Transverse colon (tissue), 4 donors: ENCODE measurements at regions of chr17 and their contacts with region 1.

Region 1: GRCh38 chr17:59004338-59005111 is 102.2 kb downstream of the TRIM37 start:
- DNase-seq: peak; percentile 64
- H3K4me3 ChIP-seq: no peak overlapping the region
- H3K27ac ChIP-seq: no peak overlapping the region
- H3K4me1 ChIP-seq: peaks cover 0 to 5% (median 0%) of the 10 kb centered on the region in 4 donors
- H3K27me3 ChIP-seq: no peaks in the 10 kb centered on the region
- CTCF ChIP-seq: peak; percentile 90 to 95 (median 93)
- EP300 ChIP-seq: no peak
- POLR2A ChIP-seq: no peak

Region 2: DNA sequence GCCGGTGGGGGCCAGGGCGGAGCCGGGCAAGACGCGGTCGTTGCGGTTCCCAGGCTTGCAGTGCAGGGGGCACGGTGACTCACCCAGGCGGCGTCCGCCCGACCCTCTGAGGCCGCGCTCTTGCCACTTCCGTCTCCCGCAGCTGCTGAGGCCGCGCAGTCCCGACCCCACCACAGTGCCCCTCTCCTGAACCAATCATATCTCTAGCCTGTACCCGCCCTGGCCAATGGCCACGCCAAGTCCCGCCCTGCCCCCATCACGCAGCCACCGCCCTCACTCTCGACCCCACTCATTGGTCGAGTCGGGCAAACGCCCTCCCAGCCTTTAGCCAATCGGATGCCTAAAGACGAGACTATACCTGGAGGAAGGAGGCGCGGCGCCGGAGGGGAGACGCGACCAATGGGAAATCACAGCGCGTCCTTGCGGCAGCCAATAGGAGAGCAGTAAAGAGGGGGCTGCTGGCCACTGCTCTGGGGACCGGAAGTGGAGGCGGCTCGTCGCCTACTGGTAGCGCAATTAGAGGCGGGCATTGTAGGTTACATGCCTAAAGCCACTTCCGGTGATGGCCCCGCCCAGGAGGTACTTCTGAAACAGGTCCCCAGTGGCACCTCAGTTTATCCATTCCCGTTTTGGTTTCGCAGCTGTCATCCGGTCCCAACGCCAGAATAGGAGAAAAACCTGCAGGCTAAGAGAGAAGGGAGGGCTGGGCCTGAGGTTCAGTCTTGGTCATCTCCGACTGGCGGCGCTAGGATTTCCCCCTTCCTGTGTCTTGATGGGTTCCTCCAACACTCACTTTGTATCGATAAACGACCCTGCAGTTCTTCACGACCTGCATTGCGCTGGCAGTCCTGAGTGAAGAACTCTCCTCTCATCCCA is 486.6 kb before region 1 on chr17:
- in situ Hi-C with region 1: loop called in 3 of 4 experiments (anchors 10 kb)
- intact Hi-C with region 1: loop called (anchors 10 kb)
- DNase-seq: peak; percentile 100
- H3K4me3 ChIP-seq: peak overlapping the region; percentile 59 to 73 (median 68)
- H3K27ac ChIP-seq: peak overlapping the region; percentile 92 to 97 (median 96)
- H3K4me1 ChIP-seq: peaks cover 19 to 54% (median 34%) of the 10 kb centered on the region in 4 donors
- H3K27me3 ChIP-seq: no peaks in the 10 kb centered on the region
- CTCF ChIP-seq: no peak
- EP300 ChIP-seq: no peak
- POLR2A ChIP-seq: peak; percentile 74

Region 3: DNA sequence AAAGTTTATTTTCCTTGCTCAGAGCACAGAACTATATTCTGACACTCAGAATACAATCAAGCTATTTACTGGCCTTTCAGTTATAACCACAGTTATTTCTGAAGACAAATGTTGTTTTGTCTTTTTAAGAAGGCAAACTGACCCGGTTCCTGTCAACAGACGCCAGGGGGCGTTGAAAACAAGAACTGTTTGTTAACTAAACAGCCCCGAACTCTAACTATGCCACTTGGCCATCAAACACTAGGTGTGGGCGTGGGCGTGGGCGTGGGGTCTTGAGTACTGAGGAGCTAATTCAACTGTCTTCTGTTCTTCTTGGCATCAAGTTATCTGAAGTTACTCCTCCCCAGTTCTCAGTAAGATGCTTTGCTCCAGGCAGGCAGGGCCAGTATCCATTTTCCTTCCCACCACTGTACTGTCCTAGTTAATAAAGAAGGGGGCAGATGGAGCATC is 426.9 kb before region 1 on chr17:
- in situ Hi-C with region 1: loop called in 2 of 4 experiments (anchors 10 to 25 kb)
- intact Hi-C with region 1: no loop called
- DNase-seq: peak; percentile 23
- H3K4me3 ChIP-seq: no peak overlapping the region
- H3K27ac ChIP-seq: no peak overlapping the region
- H3K4me1 ChIP-seq: no peaks in the 10 kb centered on the region
- H3K27me3 ChIP-seq: no peaks in the 10 kb centered on the region
- CTCF ChIP-seq: peak; percentile 34 to 52 (median 43)
- EP300 ChIP-seq: no peak
- POLR2A ChIP-seq: no peak

Region 4: GRCh38 chr17:58587702-58588254 is 416.7 kb before region 1 on chr17:
- in situ Hi-C with region 1: loop called in 2 of 4 experiments (anchors 10 to 25 kb)
- intact Hi-C with region 1: loop called (anchors 5 kb)
- DNase-seq: peak; percentile 54
- H3K4me3 ChIP-seq: no peak overlapping the region
- H3K27ac ChIP-seq: no peak overlapping the region
- H3K4me1 ChIP-seq: no peaks in the 10 kb centered on the region
- H3K27me3 ChIP-seq: no peaks in the 10 kb centered on the region
- CTCF ChIP-seq: peak; percentile 76 to 95 (median 91)
- EP300 ChIP-seq: no peak
- POLR2A ChIP-seq: no peak

Region 5: GRCh38 chr17:58595326-58595725 is 409.2 kb before region 1 on chr17:
- in situ Hi-C with region 1: loop called in 2 of 4 experiments (anchors 10 to 25 kb)
- intact Hi-C with region 1: no loop called
- DNase-seq: no peak
- H3K4me3 ChIP-seq: no peak overlapping the region
- H3K27ac ChIP-seq: no peak overlapping the region
- H3K4me1 ChIP-seq: no peaks in the 10 kb centered on the region
- H3K27me3 ChIP-seq: no peaks in the 10 kb centered on the region
- CTCF ChIP-seq: no peak
- EP300 ChIP-seq: no peak
- POLR2A ChIP-seq: no peak

Region 6: DNA sequence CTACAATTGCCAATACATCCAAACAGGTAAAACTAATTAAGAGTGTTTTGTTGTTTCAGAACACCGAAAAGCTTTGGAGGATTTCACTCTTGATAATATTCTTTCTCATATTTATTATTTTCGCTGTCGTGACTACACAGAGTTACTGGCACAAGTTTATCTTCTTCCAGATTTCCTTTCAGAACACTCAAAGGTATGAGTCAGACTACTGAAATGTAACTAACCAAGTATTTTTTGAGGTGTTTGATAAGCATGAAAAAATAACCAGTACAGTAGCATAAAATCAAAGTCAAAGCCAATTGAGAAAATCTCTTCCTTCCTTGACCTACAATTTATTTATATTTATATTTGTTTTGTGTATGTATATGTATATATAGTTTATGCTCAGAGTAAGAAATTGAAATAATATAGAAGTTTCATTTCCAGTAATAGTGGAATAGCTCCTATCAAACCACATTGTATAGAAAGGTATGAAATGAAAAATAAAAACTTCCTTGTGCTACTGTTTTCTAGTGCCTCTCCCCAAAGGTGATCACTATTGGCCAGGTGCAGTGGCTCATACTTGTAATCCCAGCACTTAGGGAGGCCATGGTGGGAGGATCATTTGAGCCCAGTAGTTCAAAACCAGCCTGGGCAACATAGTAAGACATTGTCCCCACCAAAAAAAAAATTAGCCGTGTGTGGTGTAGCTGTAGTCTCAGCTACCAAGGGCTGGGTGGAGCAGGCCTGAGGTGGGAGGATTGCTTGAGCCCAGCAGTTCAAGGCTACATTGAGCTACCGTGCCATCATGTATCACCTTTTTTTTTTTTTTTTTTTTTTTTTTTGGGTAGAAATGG is 301.2 kb before region 1 on chr17:
- in situ Hi-C with region 1: loop called in 1 of 4 experiments (anchors 10 kb)
- intact Hi-C with region 1: no loop called
- DNase-seq: no peak
- H3K4me3 ChIP-seq: no peak overlapping the region
- H3K27ac ChIP-seq: no peak overlapping the region
- H3K4me1 ChIP-seq: no peaks in the 10 kb centered on the region
- H3K27me3 ChIP-seq: no peaks in the 10 kb centered on the region
- CTCF ChIP-seq: no peak
- EP300 ChIP-seq: no peak
- POLR2A ChIP-seq: no peak

Region 7: GRCh38 chr17:58710936-58711775 is 293.4 kb before region 1 on chr17:
- in situ Hi-C with region 1: loop called in 3 of 4 experiments (anchors 5 to 10 kb)
- intact Hi-C with region 1: loop called (anchors 5 kb)
- DNase-seq: peak; percentile 10
- H3K4me3 ChIP-seq: no peak overlapping the region
- H3K27ac ChIP-seq: no peak overlapping the region
- H3K4me1 ChIP-seq: no peaks in the 10 kb centered on the region
- H3K27me3 ChIP-seq: no peaks in the 10 kb centered on the region
- CTCF ChIP-seq: peak; percentile 62 to 73 (median 64)
- EP300 ChIP-seq: no peak
- POLR2A ChIP-seq: no peak

Region 8: DNA sequence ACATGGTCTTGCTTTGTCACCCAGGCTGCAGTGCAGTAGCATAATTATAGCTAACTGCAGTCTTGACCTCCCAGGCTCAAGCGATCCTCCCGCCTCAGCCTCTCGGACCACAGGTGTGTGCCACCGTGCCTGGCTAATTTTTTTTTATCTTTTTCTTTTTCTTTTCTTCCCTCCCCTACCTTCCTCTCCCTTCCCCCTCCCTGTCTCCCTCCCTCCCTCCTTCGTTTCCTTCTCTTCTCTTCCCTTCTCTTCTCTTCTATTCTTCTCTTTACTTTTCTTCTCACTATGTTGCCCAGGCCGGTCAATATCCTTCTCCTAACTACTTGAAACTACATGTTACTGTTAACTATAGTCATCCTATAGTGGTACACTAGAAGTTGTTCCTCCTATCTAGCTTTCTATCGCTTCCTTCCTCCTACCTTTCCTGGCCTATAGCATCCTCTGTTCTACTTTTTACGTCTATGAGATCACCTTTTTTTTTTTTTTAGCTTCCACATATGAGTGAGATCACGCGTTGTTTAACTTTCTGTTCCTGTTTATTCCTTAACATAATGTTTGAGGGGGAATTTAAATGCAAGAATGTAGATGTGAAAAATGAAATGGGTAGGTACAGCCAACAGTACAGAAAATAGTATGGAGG is 296.3 kb after region 1 on chr17:
- in situ Hi-C with region 1: no loop called
- intact Hi-C with region 1: no loop called
- DNase-seq: no peak
- H3K4me3 ChIP-seq: no peak overlapping the region
- H3K27ac ChIP-seq: no peak overlapping the region
- H3K4me1 ChIP-seq: peaks cover 0 to 50% (median 21%) of the 10 kb centered on the region in 4 donors
- H3K27me3 ChIP-seq: no peaks in the 10 kb centered on the region
- CTCF ChIP-seq: no peak
- EP300 ChIP-seq: no peak
- POLR2A ChIP-seq: no peak